Naive thymus-derived CD8-positive, alpha-beta T cell (primary cell): ENCODE measurements at regions of chr1 and their contacts with region 1.

Region 1: GRCh38 chr1:19448491-19449439 is 36.6 kb downstream of the CAPZB start:
- DNase-seq: peak in 1 of 10 donors; percentile 35
- ATAC-seq: peak; percentile 41 to 55
- H3K4me3 Mint-ChIP-seq: peak overlapping the region; percentile 9 to 86 (median 70)
- H3K27ac Mint-ChIP-seq: peak overlapping the region; percentile 75 to 92 (median 88)
- H3K4me1 Mint-ChIP-seq: peaks cover 62 to 95% (median 93%) of the 10 kb centered on the region in 4 donors
- H3K27me3 Mint-ChIP-seq: no peaks in the 10 kb centered on the region

Region 2: DNA sequence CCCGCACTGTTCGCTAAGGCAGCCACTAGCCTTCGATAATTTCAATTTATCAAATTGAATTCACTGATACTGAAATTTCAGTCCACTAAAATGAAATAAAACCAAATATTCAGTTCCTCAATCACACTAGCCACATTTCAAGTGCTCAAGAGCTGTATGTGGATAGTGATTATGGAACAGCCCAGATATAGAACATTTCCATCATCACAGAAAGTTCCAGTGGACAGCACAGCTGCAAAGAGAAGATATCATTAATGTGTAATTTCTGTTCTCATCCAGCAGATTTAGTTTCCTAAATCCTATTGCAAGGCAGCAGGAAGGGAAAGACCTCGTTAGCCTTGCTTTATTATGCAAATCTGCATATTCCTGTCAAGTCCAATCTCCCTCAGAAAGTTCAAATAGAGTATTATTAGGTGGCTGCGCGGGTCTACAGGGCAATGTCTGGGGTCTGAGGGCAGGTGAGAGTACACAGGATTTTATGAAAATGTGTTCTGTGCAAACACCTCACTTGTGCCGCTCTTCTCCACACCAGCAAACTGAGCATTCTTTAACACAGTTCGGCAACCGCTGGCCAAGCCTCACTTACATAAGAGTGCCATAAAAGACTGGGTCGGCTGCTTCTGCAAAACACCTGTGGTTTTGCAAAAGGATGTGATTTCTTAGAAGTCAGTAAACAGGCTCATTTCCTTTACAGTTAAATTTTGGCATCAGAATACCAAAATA is 14.2 kb after region 1 on chr1:
- POLR2A ChIA-PET with region 1: interaction called, 808 read pairs
- DNase-seq: peak; percentile 44 to 89 (median 74)
- ATAC-seq: peak; percentile 83 to 86
- H3K4me3 Mint-ChIP-seq: peak overlapping the region; percentile 68 to 90 (median 84)
- H3K27ac Mint-ChIP-seq: peak overlapping the region; percentile 92 to 98 (median 96)
- H3K4me1 Mint-ChIP-seq: peaks cover 35 to 95% (median 90%) of the 10 kb centered on the region in 4 donors
- H3K27me3 Mint-ChIP-seq: no peaks in the 10 kb centered on the region

Region 3: GRCh38 chr1:19485362-19486187 is 36.8 kb after region 1 on chr1 and contains the start of gene CAPZB:
- POLR2A ChIA-PET with region 1: interaction called, 808 read pairs
- DNase-seq: peak; percentile 87 to 98 (median 92)
- ATAC-seq: peak; percentile 84 to 86
- H3K4me3 Mint-ChIP-seq: peak within 1 kb of the TSS; percentile 89 to 96 (median 94)
- H3K27ac Mint-ChIP-seq: peak within 1 kb of the TSS; percentile 95 to 98 (median 97)
- H3K4me1 Mint-ChIP-seq: peaks cover 40 to 80% (median 68%) of the 10 kb centered on the region in 4 donors
- H3K27me3 Mint-ChIP-seq: no peaks in the 10 kb centered on the region
- polyA plus RNA-seq, gene CAPZB: 475 to 592 (median 562) TPM